ENCODE measurements at regions of chr13 and their contacts with region 1.

Region 1: GRCh38 chr13:95191821-95192563 is 109.3 kb downstream of the ABCC4 start:
- DNase-seq: peak; percentile 86
- ATAC-seq: peak; percentile 90

Region 2: DNA sequence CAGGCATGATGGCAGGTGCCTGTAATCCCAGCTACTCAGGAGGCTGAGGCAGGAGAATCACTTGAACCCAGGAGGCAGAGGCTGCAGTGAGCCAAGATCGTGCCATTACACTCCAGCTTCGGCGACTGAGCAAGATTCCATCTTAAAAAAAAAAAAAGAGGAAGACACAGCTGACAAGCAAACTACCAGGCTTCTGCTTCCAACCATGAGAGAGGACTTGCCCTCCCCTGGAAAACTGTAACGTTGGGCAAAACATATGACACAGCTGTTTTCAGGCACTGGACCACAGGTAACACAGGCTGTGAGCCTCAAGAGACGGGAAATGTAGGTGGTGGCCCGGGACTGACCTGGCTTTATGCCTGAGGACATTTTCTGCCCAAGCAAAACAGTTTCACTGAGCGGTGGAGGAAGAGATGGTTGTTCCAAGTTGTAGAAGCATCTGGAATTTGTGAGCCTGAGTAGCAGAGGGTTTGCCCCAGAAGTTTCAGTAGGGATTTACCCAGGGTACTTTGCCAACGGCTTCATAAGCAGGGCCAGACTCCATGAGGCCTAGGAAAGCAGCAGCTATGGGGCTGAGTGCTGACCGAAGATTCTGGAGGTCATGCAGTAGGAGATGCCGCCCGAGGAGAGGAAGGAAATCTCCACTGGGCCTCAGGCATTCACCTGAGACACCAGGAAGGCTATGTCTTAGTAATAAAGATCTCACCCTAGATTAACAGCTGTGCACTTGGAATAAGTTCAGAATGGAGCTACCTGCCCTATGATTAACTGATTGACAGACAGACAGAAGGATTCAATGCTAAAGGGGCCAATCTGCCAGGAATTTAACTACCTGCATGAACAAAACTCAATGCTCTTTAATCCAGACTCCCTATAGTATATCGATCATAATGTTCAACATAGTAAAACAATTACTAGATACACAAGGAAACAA is 21.3 kb after region 1 on chr13:
- intact Hi-C with region 1: no loop called
- DNase-seq: no peak
- ATAC-seq: no peak

Region 3: GRCh38 chr13:95301183-95301967 is 109.4 kb after region 1 on chr13 and contains the start of gene ABCC4:
- intact Hi-C with region 1: loop called (anchors 5 kb)
- DNase-seq: peak; percentile 83
- ATAC-seq: peak; percentile 87
- total RNA-seq, gene ABCC4: 4.0 TPM

Region 4: GRCh38 chr13:95335667-95336066 is 143.7 kb after region 1 on chr13:
- intact Hi-C with region 1: no loop called
- DNase-seq: no peak
- ATAC-seq: no peak

Region 5: DNA sequence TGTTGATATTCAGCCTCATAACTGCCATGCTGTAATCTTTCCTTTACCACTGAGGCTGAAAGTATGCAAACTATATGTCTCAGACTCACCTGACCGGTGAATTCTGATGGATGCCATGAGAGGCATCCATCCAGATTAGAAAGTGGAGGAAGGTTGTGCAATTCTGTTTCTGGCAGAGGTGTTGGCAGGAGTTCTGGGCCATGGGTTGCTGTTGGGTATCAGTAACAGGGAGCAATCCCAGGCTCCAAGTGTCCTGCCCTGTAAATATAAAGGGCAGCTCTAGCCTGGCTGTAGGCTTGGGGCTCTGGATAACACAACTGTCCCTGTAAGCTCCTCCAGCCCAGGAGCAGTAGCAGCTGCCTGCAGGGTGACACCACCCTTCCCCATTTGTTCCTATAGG is 186.6 kb after region 1 on chr13:
- intact Hi-C with region 1: loop called (anchors 1 kb)
- DNase-seq: no peak
- ATAC-seq: peak; percentile 62

Region 6: GRCh38 chr13:95403828-95404522 is 212.0 kb after region 1 on chr13:
- intact Hi-C with region 1: loop called (anchors 1 kb)
- DNase-seq: peak; percentile 89
- ATAC-seq: peak; percentile 90

Region 7: DNA sequence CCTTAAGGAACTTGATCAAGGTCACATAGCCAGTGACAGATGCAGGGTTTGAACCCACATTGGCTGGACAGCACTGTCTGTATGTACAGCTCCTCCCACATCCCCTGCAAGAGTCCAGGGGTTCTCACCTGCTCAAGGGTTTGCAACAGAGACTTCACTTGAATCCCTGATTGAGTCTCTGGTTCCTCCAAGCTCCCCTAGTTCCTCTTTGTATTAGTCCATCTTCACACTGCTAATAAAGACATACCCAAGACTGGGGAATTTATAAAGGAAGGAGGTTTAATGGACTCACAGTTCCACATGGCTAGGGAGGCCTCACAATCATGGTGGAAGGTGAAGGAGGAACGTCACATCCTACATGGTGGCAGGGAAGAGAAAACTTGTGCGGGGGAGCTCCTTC is 287.7 kb after region 1 on chr13:
- intact Hi-C with region 1: loop called (anchors 2 kb)
- DNase-seq: no peak
- ATAC-seq: no peak

Measured in Right ventricle myocardium inferior (tissue), 1 donor.